Left ventricle myocardium superior (tissue), 1 donor: ENCODE measurements at regions of chr3 and their contacts with region 1.

Region 1: GRCh38 chr3:160003520-160004128 is 15.0 kb downstream of the IL12A start:
- DNase-seq: peak; percentile 79
- ATAC-seq: peak; percentile 92

Region 2: GRCh38 chr3:159796744-159797143 is 206.9 kb before region 1 on chr3:
- intact Hi-C with region 1: no loop called
- DNase-seq: no peak
- ATAC-seq: peak; percentile 32

Region 3: GRCh38 chr3:159828542-159828943 is 175.1 kb before region 1 on chr3:
- intact Hi-C with region 1: loop called (anchors 5 kb)
- DNase-seq: no peak
- ATAC-seq: peak; percentile 59

Region 4: DNA sequence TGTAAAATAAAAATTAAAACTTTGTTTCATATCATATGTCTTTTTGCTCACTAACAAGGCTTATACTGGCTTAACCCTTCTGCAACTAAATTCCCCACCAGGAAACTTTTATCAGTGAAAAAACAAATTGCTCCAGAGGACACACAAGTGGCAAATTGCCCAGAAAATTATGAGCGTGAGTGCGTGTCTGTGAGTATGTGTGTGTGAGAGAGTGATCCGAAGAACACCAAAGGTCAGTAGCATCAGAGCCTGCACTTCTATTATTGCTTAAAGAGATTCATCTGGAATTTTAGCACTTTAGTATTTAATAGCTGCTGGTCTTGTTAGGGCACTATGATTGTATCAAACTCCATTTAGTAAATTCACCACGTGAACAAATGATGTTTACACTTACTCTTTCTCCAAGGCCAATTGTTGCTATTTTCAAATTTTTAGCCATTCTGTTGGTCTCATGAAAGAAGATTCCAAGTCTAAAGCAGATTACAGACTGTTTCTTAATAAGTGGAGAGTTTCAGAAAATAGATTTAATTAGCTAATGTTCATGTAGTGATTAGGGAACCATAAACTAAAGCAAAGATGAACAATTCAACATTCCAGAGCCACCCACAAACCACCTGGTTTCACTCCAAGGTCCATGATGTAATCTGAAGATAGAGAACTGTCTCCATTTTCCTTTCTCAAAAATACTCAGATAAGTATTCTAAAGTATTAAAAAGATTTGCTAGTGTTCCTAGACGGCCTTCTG is 106.1 kb before region 1 on chr3:
- intact Hi-C with region 1: loop called (anchors 5 kb)
- DNase-seq: no peak
- ATAC-seq: peak; percentile 55